MCF 10A (cell line): ENCODE measurements at regions of chr12 and their contacts with region 1.

Region 1: GRCh38 chr12:52327052-52327829 is 6.0 kb upstream of the KRT83 start:
- DNase-seq: peak; percentile 98
- H3K4me3 Mint-ChIP-seq: no peak overlapping the region
- H3K27ac Mint-ChIP-seq: no peak overlapping the region
- H3K4me1 Mint-ChIP-seq: peaks cover 14% of the 10 kb centered on the region
- H3K27me3 Mint-ChIP-seq: no peaks in the 10 kb centered on the region
- CTCF ChIP-seq: peak; percentile 97

Region 2: DNA sequence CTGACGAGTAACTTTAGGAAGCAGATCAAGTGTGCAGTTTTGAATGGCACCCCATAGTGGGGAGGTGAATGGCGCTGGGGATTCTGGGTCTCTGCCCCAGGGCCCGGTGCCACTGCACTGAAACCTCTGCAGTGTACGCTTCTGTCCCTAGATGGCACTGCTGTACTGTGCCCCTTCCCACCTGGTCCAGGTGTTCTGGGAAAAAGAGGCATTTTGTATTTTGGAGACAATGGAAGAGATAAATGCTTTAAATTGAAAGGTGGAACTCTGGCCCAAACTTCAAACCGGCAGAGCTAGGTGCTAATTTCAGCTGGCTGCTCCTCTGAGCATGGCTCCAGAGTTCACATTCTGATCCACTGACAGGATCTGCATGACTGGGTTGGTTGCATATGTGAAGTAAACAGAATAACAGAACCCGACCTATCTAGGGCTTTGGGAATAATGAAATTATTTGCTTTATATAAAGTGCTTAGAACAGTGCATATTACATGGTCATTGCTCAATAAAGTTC is 187.6 kb before region 1 on chr12:
- CTCF ChIA-PET with region 1: interaction called, 10 read pairs
- POLR2A ChIA-PET with region 1: no interaction called
- intact Hi-C with region 1: loop called (anchors 1 kb)
- DNase-seq: peak; percentile 75
- H3K4me3 Mint-ChIP-seq: no peak overlapping the region
- H3K27ac Mint-ChIP-seq: no peak overlapping the region
- H3K4me1 Mint-ChIP-seq: peaks cover 25% of the 10 kb centered on the region
- H3K27me3 Mint-ChIP-seq: no peaks in the 10 kb centered on the region
- CTCF ChIP-seq: peak; percentile 97

Region 3: DNA sequence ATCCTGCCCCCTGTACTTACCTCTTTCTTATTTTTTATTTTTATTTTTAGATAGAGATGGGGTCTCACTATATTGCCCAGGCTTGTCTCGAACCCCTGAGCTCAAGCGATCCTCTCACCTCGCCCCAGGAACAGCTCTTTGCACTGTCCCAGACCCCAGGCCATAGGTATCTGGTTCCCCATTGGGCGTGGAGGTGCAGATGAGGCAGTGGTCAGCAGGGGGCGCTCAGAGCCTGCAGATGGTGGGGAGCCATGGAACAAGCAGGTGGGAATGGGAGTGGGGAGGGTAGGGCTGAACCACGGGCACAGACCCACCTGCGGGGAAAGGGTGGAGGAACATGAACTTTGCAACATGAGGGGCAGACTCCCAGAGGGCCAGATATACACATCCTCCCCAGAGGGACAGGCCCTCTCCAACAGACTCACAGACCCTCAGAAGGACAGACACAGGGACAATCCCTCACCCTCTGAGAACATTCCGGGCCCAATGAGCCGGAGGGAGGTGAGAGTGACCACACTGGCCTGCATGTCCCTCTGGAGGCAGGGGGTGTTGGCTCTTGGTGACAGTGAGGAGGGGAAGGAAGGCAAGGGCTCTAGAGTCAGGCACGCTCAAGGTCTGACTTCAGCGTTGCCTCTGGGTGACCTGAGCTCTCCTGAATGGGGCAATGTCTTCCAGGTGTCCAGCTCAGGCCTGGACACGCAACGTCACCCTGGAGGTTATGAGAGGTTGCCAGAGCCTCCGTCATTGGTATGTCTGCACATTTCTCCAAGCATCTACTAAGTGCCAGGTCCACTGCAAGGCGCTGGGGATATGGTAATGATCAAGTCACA is 170.3 kb before region 1 on chr12:
- CTCF ChIA-PET with region 1: interaction called, 29 read pairs
- POLR2A ChIA-PET with region 1: interaction called, 6 read pairs
- intact Hi-C with region 1: loop called (anchors 1 kb)
- DNase-seq: peak; percentile 85
- H3K4me3 Mint-ChIP-seq: no peak overlapping the region
- H3K27ac Mint-ChIP-seq: peak overlapping the region; percentile 91
- H3K4me1 Mint-ChIP-seq: peaks cover 30% of the 10 kb centered on the region
- H3K27me3 Mint-ChIP-seq: no peaks in the 10 kb centered on the region
- CTCF ChIP-seq: peak; percentile 98

Region 4: DNA sequence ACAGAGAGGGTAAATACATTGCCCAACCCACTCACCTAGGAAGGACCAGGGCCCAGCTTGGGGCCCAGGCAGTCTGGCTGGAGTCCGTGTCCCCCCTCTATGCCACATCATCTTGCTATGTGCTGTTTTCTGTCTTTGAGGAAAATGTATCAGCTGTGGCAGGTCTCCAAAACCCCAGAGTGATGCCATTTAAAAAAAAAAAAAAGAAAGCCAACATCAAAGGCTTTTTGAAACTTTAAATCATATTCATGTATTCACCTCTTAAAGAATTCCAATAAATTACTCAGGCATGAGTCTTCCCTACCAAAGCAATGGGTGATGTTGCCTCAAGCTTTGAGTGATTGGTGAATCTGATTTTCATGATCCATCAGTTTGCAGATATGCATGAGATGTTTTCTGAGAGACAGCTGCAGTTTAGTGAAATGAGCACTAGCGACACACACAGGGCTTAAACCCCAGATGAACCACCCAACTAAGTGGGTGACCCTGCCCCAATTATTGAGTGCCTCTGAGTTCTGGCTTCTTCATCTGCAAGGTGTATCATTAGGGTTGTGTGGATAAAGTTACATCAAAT is 42.0 kb before region 1 on chr12:
- CTCF ChIA-PET with region 1: interaction called, 57 read pairs
- POLR2A ChIA-PET with region 1: interaction called, 24 read pairs
- intact Hi-C with region 1: loop called (anchors 1 kb)
- DNase-seq: peak; percentile 69
- H3K4me3 Mint-ChIP-seq: peak overlapping the region; percentile 80
- H3K27ac Mint-ChIP-seq: peak overlapping the region; percentile 83
- H3K4me1 Mint-ChIP-seq: peaks cover 46% of the 10 kb centered on the region
- H3K27me3 Mint-ChIP-seq: no peaks in the 10 kb centered on the region
- CTCF ChIP-seq: no peak

Region 5: GRCh38 chr12:52338241-52338960 is 11.2 kb after region 1 on chr12:
- CTCF ChIA-PET with region 1: interaction called, 39 read pairs
- POLR2A ChIA-PET with region 1: interaction called, 13 read pairs
- intact Hi-C with region 1: no loop called
- DNase-seq: peak; percentile 81
- H3K4me3 Mint-ChIP-seq: peak overlapping the region; percentile 39
- H3K27ac Mint-ChIP-seq: peak overlapping the region; percentile 73
- H3K4me1 Mint-ChIP-seq: peaks cover 29% of the 10 kb centered on the region
- H3K27me3 Mint-ChIP-seq: no peaks in the 10 kb centered on the region
- CTCF ChIP-seq: no peak

Region 6: GRCh38 chr12:52454411-52455216 is 127.4 kb after region 1 on chr12:
- CTCF ChIA-PET with region 1: no interaction called
- POLR2A ChIA-PET with region 1: no interaction called
- intact Hi-C with region 1: no loop called
- DNase-seq: peak; percentile 60
- H3K4me3 Mint-ChIP-seq: no peak overlapping the region
- H3K27ac Mint-ChIP-seq: no peak overlapping the region
- H3K4me1 Mint-ChIP-seq: peaks cover 29% of the 10 kb centered on the region
- H3K27me3 Mint-ChIP-seq: no peaks in the 10 kb centered on the region
- CTCF ChIP-seq: no peak

Region 7: DNA sequence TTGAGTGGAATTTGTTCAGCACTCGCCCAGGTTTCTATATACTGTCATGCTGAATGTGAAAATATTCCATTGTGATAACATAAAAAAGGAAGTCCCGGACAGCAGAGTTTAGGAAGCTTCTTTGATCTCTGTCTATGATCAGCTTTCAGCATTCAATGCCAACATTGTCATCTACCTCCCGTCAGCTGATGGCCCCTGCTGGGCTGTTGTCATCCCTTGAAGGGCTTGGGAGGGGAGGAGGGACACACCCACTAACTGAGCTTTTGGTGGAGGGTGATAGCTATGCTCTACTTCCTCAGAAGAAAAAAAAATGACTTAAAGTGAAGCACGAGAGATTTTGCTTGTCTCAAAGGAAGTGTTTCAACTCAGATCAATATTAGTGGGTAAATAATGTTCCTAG is 380.8 kb after region 1 on chr12:
- CTCF ChIA-PET with region 1: no interaction called
- POLR2A ChIA-PET with region 1: no interaction called
- intact Hi-C with region 1: no loop called
- DNase-seq: no peak
- H3K4me3 Mint-ChIP-seq: no peak overlapping the region
- H3K27ac Mint-ChIP-seq: no peak overlapping the region
- H3K4me1 Mint-ChIP-seq: no peaks in the 10 kb centered on the region
- H3K27me3 Mint-ChIP-seq: peaks cover 22% of the 10 kb centered on the region
- CTCF ChIP-seq: no peak